Common myeloid progenitor, CD34-positive (primary cell): ENCODE measurements at regions of chr17 and their contacts with region 1.

Region 1: GRCh38 chr17:40075201-40075941 is 12.6 kb downstream of the THRA start:
- DNase-seq: peak; percentile 60 to 81 (median 80)
- H3K4me3 ChIP-seq: peak overlapping the region in 2 of 7 experiments; percentile 7 to 32
- H3K27ac ChIP-seq: peak overlapping the region in 1 of 2 experiments; percentile 39
- H3K4me1 ChIP-seq: peaks cover 4 to 51% (median 46%) of the 10 kb centered on the region in 4 experiments
- H3K27me3 ChIP-seq: no peaks in the 10 kb centered on the region

Region 2: GRCh38 chr17:40026816-40027613 is 48.4 kb before region 1 on chr17:
- CTCF ChIA-PET with region 1: interaction called, 16 read pairs
- POLR2A ChIA-PET with region 1: interaction called, 3 read pairs
- DNase-seq: peak; percentile 67 to 83 (median 75)
- H3K4me3 ChIP-seq: no peak overlapping the region
- H3K27ac ChIP-seq: no peak overlapping the region
- H3K4me1 ChIP-seq: peaks cover 0 to 6% (median 0%) of the 10 kb centered on the region in 4 experiments
- H3K27me3 ChIP-seq: no peaks in the 10 kb centered on the region

Region 3: GRCh38 chr17:40038882-40039513 is 36.4 kb before region 1 on chr17:
- CTCF ChIA-PET with region 1: interaction called, 25 read pairs
- POLR2A ChIA-PET with region 1: interaction called, 7 read pairs
- DNase-seq: peak; percentile 47 to 68 (median 64)
- H3K4me3 ChIP-seq: no peak overlapping the region
- H3K27ac ChIP-seq: no peak overlapping the region
- H3K4me1 ChIP-seq: peaks cover 0 to 5% (median 2%) of the 10 kb centered on the region in 4 experiments
- H3K27me3 ChIP-seq: no peaks in the 10 kb centered on the region

Region 4: DNA sequence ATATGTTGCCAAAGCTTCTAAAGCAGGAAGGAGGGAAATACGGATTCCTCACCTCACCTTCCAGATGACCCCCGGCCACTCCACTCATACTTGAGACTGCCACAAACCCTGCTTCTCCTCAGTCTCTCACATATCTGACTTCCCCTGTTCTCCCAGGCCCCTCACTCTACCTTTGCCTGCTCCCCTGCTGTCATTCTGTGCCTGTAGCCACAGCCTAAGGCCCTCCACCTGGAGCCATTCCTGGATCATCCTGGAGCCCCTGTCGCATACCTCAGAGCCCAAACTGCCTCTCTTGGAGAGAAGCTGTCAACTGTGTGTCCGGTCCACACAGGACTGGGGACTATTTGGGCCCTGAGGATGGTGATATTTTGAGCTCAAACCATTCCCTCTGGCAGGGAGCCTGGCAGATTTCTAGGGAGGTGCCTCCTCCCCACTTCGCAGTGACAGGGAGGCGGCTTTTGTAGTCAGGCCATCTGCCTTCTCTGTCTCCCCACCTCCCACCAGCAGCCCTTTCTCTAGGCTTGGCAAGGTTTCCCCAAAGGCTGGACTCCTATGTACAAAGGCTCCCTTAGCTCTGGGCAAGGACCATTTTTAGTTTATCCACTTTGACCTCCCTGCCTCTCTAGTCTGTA is 18.9 kb before region 1 on chr17:
- CTCF ChIA-PET with region 1: interaction called, 50 read pairs
- POLR2A ChIA-PET with region 1: interaction called, 10 read pairs
- DNase-seq: no peak
- H3K4me3 ChIP-seq: no peak overlapping the region
- H3K27ac ChIP-seq: no peak overlapping the region
- H3K4me1 ChIP-seq: peaks cover 0 to 13% (median 9%) of the 10 kb centered on the region in 4 experiments
- H3K27me3 ChIP-seq: peaks cover 0 to 5% (median 0%) of the 10 kb centered on the region in 5 experiments

Region 5: DNA sequence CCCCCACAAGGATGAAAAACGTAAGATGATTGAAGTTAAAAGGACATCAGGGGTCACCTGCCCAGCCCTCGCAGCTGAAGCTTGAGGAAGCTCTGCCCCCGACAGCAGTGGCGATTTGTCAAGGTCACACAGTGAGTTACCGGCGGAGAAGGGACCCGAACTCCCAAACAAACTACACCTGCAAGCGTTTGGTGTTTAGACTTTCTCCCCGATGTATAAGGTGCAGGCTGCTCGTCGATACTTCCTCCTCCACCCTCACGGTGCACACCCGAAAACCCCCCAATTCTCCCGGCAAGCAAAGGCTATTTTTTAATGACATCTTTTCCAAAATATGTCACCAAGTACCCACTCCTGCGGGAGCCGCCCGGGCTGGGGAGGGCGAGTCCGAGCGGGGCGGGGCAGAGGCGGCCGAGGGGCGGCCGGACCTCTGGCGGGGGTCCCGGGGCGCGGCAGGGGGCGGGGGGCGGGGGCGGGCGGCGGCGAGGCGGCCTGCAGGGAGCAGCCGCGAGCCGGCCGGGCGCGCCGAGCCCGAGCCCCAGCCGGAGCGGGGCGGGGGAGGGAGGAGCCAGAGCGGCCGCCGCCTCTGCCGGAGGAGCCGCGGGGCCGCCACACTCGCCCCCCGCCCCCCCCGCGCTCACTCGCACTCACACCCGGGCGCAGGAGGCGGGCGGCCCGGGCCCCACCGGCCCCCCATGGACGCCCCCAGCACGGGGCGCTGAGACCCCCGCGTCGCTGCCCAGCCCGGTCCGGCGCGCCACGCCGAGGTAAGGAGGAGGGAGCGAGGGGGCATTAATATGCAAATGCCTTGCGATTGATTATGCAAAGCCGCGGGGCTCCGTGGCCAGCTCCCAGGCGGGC is 12.8 kb before region 1 on chr17 and contains the start of gene THRA:
- CTCF ChIA-PET with region 1: interaction called, 112 read pairs
- POLR2A ChIA-PET with region 1: interaction called, 4 read pairs
- DNase-seq: peak in 2 of 3 donors; percentile 72 to 79
- H3K4me3 ChIP-seq: peak within 1 kb of the TSS; percentile 71 to 96 (median 90)
- H3K27ac ChIP-seq: peak within 1 kb of the TSS in 1 of 2 experiments; percentile 69
- H3K4me1 ChIP-seq: peaks cover 8 to 40% (median 37%) of the 10 kb centered on the region in 4 experiments
- H3K27me3 ChIP-seq: peaks cover 0 to 5% (median 0%) of the 10 kb centered on the region in 5 experiments

Region 6: DNA sequence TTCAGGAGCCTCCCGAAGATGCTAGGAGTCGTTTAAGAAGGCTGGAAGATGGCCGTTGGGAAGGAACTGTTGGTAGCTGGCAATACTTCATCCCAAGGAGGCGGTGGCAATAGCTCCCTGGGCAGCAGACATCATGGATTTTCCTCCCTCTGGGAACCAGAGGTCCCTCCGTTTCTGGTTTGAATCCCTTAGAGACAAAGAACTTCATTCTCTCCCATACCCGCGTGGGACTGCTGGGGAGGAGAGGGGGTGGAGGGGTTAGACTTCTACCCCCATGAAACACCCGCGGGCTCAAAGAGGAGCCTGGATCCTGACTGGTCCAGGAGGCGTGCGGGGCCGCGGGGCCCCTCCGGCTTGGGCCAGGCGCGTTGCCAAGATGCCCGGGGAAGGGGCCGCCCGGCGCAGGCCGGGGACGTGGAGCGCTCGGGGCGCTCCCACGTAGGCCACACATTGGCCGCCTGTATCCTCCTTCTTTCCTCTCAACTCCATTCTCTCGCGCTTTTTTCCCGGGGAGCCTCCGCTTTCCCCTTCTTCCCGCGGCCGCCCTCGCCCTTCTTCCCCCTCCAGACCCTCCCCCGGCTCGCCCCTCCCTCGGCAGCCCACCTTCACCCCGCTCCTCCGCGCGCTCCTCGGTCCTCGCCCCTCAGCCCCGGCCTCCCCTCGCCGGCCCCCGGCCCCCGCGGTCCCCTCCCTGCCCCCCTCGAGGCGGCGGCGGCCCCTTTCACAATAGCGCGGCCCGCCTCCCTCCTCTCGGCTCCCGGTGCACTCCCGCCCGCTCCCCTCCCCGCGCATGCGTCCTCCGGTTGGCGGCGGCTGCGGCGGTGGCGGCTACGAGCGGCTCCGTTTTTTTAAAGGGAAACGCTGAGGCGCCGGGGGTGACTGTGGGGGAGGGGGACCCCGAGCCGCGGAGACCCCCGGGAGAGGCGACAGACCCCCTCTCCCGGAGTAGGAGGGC is 46.1 kb after region 1 on chr17 and contains the start of gene MSL1:
- CTCF ChIA-PET with region 1: interaction called, 11 read pairs
- POLR2A ChIA-PET with region 1: no interaction called
- DNase-seq: peak; percentile 72 to 86 (median 83)
- H3K4me3 ChIP-seq: peak within 1 kb of the TSS; percentile 80 to 98 (median 96)
- H3K27ac ChIP-seq: peak within 1 kb of the TSS; percentile 46 to 89
- H3K4me1 ChIP-seq: peaks cover 15 to 49% (median 39%) of the 10 kb centered on the region in 4 experiments
- H3K27me3 ChIP-seq: no peaks in the 10 kb centered on the region